HCT116 (cell line): ENCODE measurements at regions of chr15 and their contacts with region 1.

Region 1: GRCh38 chr15:75029378-75030022 is 6.1 kb downstream of the PPCDC start:
- DNase-seq: peak; percentile 51
- ATAC-seq: peak; percentile 89
- H3K4me3 ChIP-seq: no peak overlapping the region
- H3K27ac ChIP-seq: no peak overlapping the region; the same call in 1 of the 2 replicates
- H3K4me1 ChIP-seq: peaks cover 7 to 25% of the 10 kb centered on the region in 2 experiments; a peak in 3 of 4 replicates
- H3K27me3 ChIP-seq: no peaks in the 10 kb centered on the region
- CTCF ChIP-seq: peak; percentile 91 to 94 (median 94)
- POLR2A ChIP-seq: no peak
- RAD21 ChIP-seq: peak; percentile 97

Region 2: DNA sequence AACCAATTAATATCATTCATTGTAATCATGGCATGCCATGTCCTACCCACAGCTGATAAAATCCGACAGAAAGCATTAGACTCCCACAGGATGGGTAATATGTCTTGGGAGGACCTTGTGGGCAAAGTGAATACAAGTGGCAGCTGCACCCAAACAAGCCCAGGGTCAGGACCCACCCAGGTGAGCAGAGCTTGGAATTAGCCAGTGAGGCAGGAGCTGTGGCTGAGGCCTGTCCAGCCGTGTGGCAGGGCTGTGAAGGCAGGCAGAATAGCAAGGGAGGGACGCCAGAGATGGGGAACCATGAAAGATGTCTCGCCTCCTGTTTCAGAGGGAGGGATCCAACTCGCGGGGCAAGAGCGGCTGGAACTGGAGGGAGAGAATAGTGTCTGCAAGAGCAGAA is 68.4 kb after region 1 on chr15:
- CTCF ChIA-PET with region 1: no interaction called
- POLR2A ChIA-PET with region 1: no interaction called
- RAD21 ChIA-PET with region 1: no interaction called
- intact Hi-C with region 1: no loop called
- DNase-seq: no peak
- ATAC-seq: no peak
- H3K4me3 ChIP-seq: no peak overlapping the region
- H3K27ac ChIP-seq: no peak overlapping the region
- H3K4me1 ChIP-seq: peaks cover 0 to 6% of the 10 kb centered on the region in 2 experiments; a peak in 1 of 4 replicates
- H3K27me3 ChIP-seq: no peaks in the 10 kb centered on the region
- CTCF ChIP-seq: no peak
- POLR2A ChIP-seq: no peak
- RAD21 ChIP-seq: no peak

Region 3: DNA sequence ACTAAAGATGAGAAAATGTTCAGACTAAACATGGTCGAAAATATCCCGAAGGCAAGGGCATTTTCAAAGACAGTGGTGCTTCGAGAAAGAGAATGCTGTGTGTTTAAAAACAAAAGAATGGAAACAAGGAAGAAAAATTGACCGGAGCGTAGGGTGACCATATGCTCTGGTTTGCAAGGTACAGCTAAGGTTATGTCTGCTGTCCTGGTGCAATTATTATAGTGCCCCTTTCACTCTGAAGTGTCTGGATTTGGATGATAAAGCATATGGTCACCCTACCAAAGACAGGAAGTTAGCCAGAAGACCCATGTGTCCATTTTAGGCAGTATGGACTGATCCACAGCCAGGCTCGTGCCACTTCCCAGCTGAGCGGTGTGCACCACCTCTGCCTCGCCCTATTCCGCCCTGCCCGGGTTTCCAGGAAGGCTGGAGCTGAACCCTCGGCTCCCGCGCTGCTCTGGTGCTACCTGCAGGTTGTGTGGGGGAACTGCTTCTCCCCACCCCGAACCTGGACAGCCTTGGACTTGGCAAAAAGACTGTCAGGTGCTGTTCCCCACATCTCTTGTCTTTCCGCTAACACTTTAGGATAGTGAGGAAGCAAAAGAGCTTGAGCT is 278.4 kb after region 1 on chr15:
- CTCF ChIA-PET with region 1: interaction called, 12 read pairs
- POLR2A ChIA-PET with region 1: no interaction called
- RAD21 ChIA-PET with region 1: interaction called, 4 read pairs
- intact Hi-C with region 1: no loop called
- DNase-seq: peak; percentile 62
- ATAC-seq: peak; percentile 100
- H3K4me3 ChIP-seq: no peak overlapping the region
- H3K27ac ChIP-seq: no peak overlapping the region
- H3K4me1 ChIP-seq: peaks cover 4 to 24% of the 10 kb centered on the region in 2 experiments; a peak in 3 of 4 replicates
- H3K27me3 ChIP-seq: no peaks in the 10 kb centered on the region
- CTCF ChIP-seq: peak; percentile 78 to 93 (median 90)
- POLR2A ChIP-seq: no peak
- RAD21 ChIP-seq: peak; percentile 92